CD8-positive, alpha-beta T cell (primary cell): ENCODE measurements at regions of chr14 and their contacts with region 1.

Region 1: GRCh38 chr14:103920981-103921854 is 7.0 kb upstream of the TDRD9 start:
- DNase-seq: peak; percentile 90 to 97 (median 94)
- ATAC-seq: peak; percentile 99
- H3K4me3 ChIP-seq: peak overlapping the region; percentile 88 to 91
- H3K4me3 Mint-ChIP-seq: peak overlapping the region; percentile 90
- H3K27ac ChIP-seq: peak overlapping the region; percentile 67 to 71
- H3K27ac Mint-ChIP-seq: peak overlapping the region; percentile 89
- H3K4me1 ChIP-seq: peaks cover 20% of the 10 kb centered on the region
- H3K4me1 Mint-ChIP-seq: peaks cover 24% of the 10 kb centered on the region
- H3K27me3 ChIP-seq: peaks cover 0 to 8% of the 10 kb centered on the region in 2 experiments
- H3K27me3 Mint-ChIP-seq: peaks cover 7% of the 10 kb centered on the region
- CTCF ChIP-seq: peak; percentile 90

Region 2: GRCh38 chr14:102362545-102363181 is 1558.6 kb before region 1 on chr14 and contains the starts of genes CINP and TECPR2:
- CTCF ChIA-PET with region 1: no interaction called
- POLR2A ChIA-PET with region 1: no interaction called
- intact Hi-C with region 1: loop called in 1 of 2 experiments (anchors 2 kb)
- DNase-seq: peak; percentile 93 to 97 (median 96)
- ATAC-seq: peak; percentile 90
- H3K4me3 ChIP-seq: peak within 1 kb of the TSS; percentile 67 to 75
- H3K4me3 Mint-ChIP-seq: peak within 1 kb of the TSS; percentile 95
- H3K27ac ChIP-seq: peak within 1 kb of the TSS; percentile 82 to 86
- H3K27ac Mint-ChIP-seq: peak within 1 kb of the TSS; percentile 96
- H3K4me1 ChIP-seq: peaks cover 15% of the 10 kb centered on the region
- H3K4me1 Mint-ChIP-seq: peaks cover 24% of the 10 kb centered on the region
- H3K27me3 ChIP-seq: no peaks in the 10 kb centered on the region
- H3K27me3 Mint-ChIP-seq: no peaks in the 10 kb centered on the region
- CTCF ChIP-seq: no peak
- total RNA-seq, gene CINP: 15.9 to 19.2 TPM
- total RNA-seq, gene TECPR2: 3.4 to 5.8 TPM

Region 3: DNA sequence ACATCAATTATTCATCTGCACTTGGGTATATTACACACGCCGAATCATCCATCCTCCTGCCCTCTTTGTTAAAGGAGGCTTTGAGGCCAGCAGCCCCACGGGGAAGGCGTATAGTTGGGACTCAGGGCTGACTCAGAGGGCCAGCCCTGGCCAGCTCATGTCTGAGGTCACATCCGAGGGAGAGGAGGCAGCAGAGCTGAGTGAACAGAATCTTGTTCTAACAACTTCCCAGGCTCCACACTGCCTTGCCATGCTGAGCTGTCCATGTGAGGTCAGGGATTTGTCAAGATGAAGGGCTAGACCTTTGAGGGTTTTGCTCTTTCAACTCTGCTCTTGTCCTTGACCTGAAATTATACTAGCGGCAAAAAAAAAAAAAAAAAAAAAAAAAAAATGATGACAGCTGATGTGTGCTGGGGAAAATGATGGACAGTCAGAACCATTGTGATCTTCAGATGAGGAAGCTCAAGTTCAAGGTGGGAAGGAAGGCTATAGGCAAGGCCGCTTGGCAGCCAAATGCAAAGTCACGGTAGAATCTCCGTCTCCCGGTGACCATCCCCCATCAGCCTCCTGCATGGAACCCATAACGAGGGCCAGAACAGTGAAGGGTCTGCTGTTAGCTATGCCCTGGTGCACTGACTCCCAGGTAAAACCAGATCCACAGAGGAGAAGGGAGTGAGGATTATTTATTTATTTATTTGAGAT is 548.5 kb before region 1 on chr14:
- CTCF ChIA-PET with region 1: no interaction called
- POLR2A ChIA-PET with region 1: no interaction called
- intact Hi-C with region 1: no loop called
- DNase-seq: no peak
- ATAC-seq: no peak
- H3K4me3 ChIP-seq: no peak overlapping the region
- H3K4me3 Mint-ChIP-seq: no peak overlapping the region
- H3K27ac ChIP-seq: no peak overlapping the region
- H3K27ac Mint-ChIP-seq: no peak overlapping the region
- H3K4me1 ChIP-seq: no peaks in the 10 kb centered on the region
- H3K4me1 Mint-ChIP-seq: no peaks in the 10 kb centered on the region
- H3K27me3 ChIP-seq: no peaks in the 10 kb centered on the region
- H3K27me3 Mint-ChIP-seq: peaks cover 5% of the 10 kb centered on the region
- CTCF ChIP-seq: no peak

Region 4: DNA sequence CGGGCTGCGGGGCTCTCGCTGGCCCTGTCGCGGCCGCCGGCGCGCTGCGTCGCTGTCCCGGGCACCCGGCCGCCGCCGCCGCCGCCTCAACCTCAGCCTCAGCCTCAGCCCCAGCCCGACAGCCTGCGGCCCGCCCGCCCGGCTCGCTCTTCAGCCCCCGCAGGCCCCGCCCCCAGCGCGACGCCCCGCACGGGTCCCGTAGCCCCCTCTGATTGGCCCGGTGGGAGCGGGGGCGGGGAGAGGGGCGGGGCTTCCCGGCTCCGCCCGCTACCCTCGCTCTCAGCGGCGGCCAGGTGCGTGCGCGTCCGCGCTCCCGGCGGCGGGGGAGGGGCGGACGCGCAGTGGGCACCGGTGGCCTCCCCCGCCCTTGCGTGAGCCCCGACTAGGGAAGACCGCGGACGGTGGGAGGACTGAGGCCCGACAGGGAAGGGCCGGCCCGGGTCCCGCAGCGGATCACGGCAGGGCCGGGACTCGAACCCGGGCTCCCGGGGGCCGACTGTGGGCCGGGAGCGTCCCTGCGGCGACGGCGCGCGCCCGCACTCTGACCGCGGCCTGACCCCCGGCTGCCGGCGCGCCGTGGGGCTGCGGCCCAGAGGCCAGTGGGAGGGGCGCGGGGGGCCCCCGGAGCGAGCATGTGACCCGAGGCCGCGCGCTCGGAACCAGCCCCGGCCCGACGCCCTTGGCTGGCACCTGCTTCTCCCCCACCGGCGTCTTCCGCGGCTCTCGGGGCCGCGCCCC is 73.6 kb before region 1 on chr14 and contains the start of gene PPP1R13B:
- CTCF ChIA-PET with region 1: no interaction called
- POLR2A ChIA-PET with region 1: no interaction called
- intact Hi-C with region 1: loop called (anchors 1 kb)
- DNase-seq: peak; percentile 88 to 97 (median 92)
- ATAC-seq: peak; percentile 98
- H3K4me3 ChIP-seq: peak within 1 kb of the TSS; percentile 65 to 73
- H3K4me3 Mint-ChIP-seq: peak within 1 kb of the TSS; percentile 90
- H3K27ac ChIP-seq: peak within 1 kb of the TSS in 1 of 2 experiments; percentile 27
- H3K27ac Mint-ChIP-seq: peak within 1 kb of the TSS; percentile 74
- H3K4me1 ChIP-seq: peaks cover 14% of the 10 kb centered on the region
- H3K4me1 Mint-ChIP-seq: peaks cover 20% of the 10 kb centered on the region
- H3K27me3 ChIP-seq: no peaks in the 10 kb centered on the region
- H3K27me3 Mint-ChIP-seq: no peaks in the 10 kb centered on the region
- CTCF ChIP-seq: no peak
- total RNA-seq, gene PPP1R13B: 20.9 to 22.6 TPM

Region 5: GRCh38 chr14:103897075-103897947 is 23.9 kb before region 1 on chr14:
- CTCF ChIA-PET with region 1: interaction called, 70 read pairs
- POLR2A ChIA-PET with region 1: no interaction called
- intact Hi-C with region 1: loop called (anchors 1 to 2 kb)
- DNase-seq: no peak
- ATAC-seq: no peak
- H3K4me3 ChIP-seq: no peak overlapping the region
- H3K4me3 Mint-ChIP-seq: no peak overlapping the region
- H3K27ac ChIP-seq: no peak overlapping the region
- H3K27ac Mint-ChIP-seq: no peak overlapping the region
- H3K4me1 ChIP-seq: peaks cover 4% of the 10 kb centered on the region
- H3K4me1 Mint-ChIP-seq: peaks cover 5% of the 10 kb centered on the region
- H3K27me3 ChIP-seq: no peaks in the 10 kb centered on the region
- H3K27me3 Mint-ChIP-seq: peaks cover 2% of the 10 kb centered on the region
- CTCF ChIP-seq: no peak

Region 6: DNA sequence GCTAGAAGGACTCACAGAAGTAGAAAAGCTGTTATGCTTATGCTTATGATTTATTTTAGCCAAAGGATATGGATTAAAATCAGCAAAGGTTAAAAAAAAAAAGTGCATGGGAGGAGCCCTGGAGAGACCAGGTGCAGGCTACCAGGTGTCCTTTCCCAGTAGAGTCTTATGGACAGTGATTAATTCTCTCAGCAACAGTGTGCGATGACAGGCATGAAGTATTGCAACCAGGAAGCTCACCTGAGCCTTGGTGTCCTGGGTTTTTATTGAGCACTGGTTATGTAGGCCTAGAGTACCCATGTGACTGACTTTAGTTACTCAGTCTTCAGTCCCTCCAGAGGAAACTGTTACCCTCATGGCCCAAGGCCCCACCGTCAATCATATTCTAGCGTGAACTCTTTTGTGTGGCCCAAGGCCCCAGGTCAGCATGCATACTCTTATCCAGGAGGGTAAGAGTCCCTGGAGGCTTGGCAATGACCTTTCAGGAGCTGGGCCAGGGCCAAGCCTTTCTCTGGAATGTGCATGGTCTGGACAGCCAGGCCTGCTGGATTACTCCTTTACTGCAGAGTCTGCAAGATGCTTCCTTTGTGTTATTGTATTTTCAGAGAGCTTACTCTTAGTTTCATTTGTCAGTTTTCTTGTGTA is 90.7 kb after region 1 on chr14:
- CTCF ChIA-PET with region 1: no interaction called
- POLR2A ChIA-PET with region 1: no interaction called
- intact Hi-C with region 1: no loop called
- DNase-seq: no peak
- ATAC-seq: no peak
- H3K4me3 ChIP-seq: no peak overlapping the region
- H3K4me3 Mint-ChIP-seq: no peak overlapping the region
- H3K27ac ChIP-seq: no peak overlapping the region
- H3K27ac Mint-ChIP-seq: no peak overlapping the region
- H3K4me1 ChIP-seq: no peaks in the 10 kb centered on the region
- H3K4me1 Mint-ChIP-seq: no peaks in the 10 kb centered on the region
- H3K27me3 ChIP-seq: no peaks in the 10 kb centered on the region
- H3K27me3 Mint-ChIP-seq: peaks cover 4% of the 10 kb centered on the region
- CTCF ChIP-seq: no peak

Region 7: GRCh38 chr14:104085030-104085888 is 164.0 kb after region 1 on chr14 and contains the start of gene ASPG:
- CTCF ChIA-PET with region 1: no interaction called
- POLR2A ChIA-PET with region 1: no interaction called
- intact Hi-C with region 1: no loop called
- DNase-seq: peak in 3 of 9 experiments; percentile 45 to 52 (median 49)
- ATAC-seq: peak; percentile 71
- H3K4me3 ChIP-seq: no peak within 1 kb of the TSS
- H3K4me3 Mint-ChIP-seq: peak within 1 kb of the TSS; percentile 49
- H3K27ac ChIP-seq: no peak within 1 kb of the TSS
- H3K27ac Mint-ChIP-seq: no peak within 1 kb of the TSS
- H3K4me1 ChIP-seq: no peaks in the 10 kb centered on the region
- H3K4me1 Mint-ChIP-seq: peaks cover 2% of the 10 kb centered on the region
- H3K27me3 ChIP-seq: no peaks in the 10 kb centered on the region
- H3K27me3 Mint-ChIP-seq: peaks cover 16% of the 10 kb centered on the region
- CTCF ChIP-seq: no peak
- total RNA-seq, gene ASPG: not detected

Region 8: GRCh38 chr14:105414456-105415371 is 1493.5 kb after region 1 on chr14:
- CTCF ChIA-PET with region 1: no interaction called
- POLR2A ChIA-PET with region 1: no interaction called
- intact Hi-C with region 1: loop called in 1 of 2 experiments (anchors 10 kb)
- DNase-seq: peak; percentile 27 to 79 (median 57)
- ATAC-seq: peak; percentile 82
- H3K4me3 ChIP-seq: peak overlapping the region; percentile 24 to 69
- H3K4me3 Mint-ChIP-seq: peak overlapping the region; percentile 80
- H3K27ac ChIP-seq: no peak overlapping the region
- H3K27ac Mint-ChIP-seq: no peak overlapping the region
- H3K4me1 ChIP-seq: peaks cover 26% of the 10 kb centered on the region
- H3K4me1 Mint-ChIP-seq: peaks cover 14% of the 10 kb centered on the region
- H3K27me3 ChIP-seq: peaks cover 4 to 12% of the 10 kb centered on the region in 2 experiments
- H3K27me3 Mint-ChIP-seq: peaks cover 9% of the 10 kb centered on the region
- CTCF ChIP-seq: peak; percentile 92